Panc1 (cell line): ENCODE measurements at regions of chr1 and their contacts with region 1.

Region 1: DNA sequence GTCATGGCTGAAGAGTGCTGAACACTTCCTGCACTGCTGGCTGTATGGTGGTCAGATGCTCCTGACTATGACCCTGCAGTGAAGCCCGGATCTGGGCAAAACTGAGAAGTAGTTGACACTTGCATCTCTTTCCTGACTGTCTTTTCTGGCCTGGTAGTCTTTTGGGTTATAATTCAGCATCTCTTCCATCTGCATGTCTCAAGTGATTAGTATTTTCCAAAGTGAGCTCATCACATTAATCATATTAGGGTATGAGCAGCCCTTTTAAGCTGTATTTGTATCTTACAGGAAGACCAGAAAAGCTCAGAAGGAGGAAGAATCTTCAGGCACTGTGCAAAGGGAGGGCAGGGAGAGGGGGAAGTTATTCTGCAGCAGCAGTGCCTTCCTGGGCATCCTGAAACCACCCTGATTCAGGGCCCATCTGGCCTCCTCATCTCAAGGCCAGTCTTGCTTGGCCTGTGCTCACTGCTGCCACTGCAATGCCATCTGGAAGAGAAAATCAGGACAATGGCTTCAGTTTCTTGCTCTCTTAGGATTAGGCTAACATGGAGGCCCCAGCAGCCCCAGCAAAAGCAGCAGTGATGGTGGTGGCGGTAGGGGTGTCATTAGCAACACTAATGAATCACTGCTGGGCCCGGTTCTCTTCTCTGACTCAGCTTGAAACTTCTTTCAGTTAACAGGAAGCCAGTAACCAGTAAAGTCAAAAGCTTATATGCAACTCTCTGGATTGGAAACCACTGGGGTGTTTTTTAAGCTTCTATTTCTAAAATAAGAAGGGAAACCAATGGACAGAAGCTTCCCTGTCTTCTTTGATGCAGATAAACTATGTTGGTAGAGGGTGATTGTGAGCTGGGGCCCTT is 63.3 kb upstream of the WDR26 start:
- DNase-seq: peak; percentile 81
- ATAC-seq: peak; percentile 80
- H3K4me3 ChIP-seq: peak overlapping the region in 1 of 2 experiments; percentile 41; a peak in 2 of 4 replicates
- H3K27ac ChIP-seq: peak overlapping the region; percentile 87
- H3K4me1 ChIP-seq: peaks cover 31% of the 10 kb centered on the region
- H3K27me3 ChIP-seq: no peaks in the 10 kb centered on the region
- CTCF ChIP-seq: no peak

Region 2: GRCh38 chr1:224198572-224198971 is 299.4 kb before region 1 on chr1:
- CTCF ChIA-PET with region 1: no interaction called
- POLR2A ChIA-PET with region 1: interaction called, 11 read pairs
- in situ Hi-C with region 1: no loop called
- intact Hi-C with region 1: no loop called
- DNase-seq: no peak
- ATAC-seq: no peak
- H3K4me3 ChIP-seq: no peak overlapping the region
- H3K27ac ChIP-seq: no peak overlapping the region
- H3K4me1 ChIP-seq: no peaks in the 10 kb centered on the region
- H3K27me3 ChIP-seq: no peaks in the 10 kb centered on the region
- CTCF ChIP-seq: no peak